ENCODE measurements at regions of chr6 and their contacts with region 1.

Region 1: DNA sequence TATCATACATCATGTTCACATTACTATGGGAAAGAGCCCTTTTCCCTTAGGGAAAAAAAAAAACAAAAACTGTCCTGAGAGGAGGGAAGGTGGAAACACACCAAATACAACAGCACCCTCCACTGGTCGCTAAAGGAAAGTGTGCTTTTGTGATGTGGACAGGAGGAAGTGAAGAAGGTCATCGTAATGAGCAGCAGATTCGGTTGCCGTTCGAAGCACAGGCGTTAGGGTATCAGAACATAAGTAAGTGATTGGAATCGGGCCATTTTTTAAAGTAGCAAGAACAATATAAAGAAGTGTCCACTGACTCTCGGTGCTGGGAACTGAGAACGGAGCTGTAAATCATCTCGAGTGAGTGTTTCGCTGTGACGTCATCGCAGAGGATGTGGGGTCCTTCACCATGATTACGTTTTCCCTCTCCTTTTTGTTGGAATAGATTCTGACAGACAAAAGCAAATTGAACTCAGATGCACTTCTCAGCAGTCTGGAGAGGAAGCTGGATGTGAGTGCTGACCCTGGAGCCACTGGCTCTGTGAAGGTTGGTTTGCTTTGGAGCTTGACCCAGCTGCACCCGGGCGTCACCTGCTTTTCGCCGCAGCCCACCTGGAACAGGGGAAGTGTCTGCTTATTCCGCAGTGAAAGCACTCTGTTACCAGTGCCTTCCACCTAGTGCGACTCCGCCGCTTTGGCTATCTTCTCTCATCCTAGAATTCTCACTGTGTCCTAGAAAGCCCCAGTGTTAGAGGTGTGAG is 203.6 kb upstream of the GMDS start:
- DNase-seq: peak; percentile 34
- H3K4me3 Mint-ChIP-seq: peak overlapping the region; percentile 14
- H3K27ac Mint-ChIP-seq: no peak overlapping the region
- H3K4me1 Mint-ChIP-seq: peaks cover 3% of the 10 kb centered on the region
- H3K27me3 Mint-ChIP-seq: peaks cover 3% of the 10 kb centered on the region

Region 2: GRCh38 chr6:2434116-2434515 is 14.9 kb before region 1 on chr6:
- CTCF ChIA-PET with region 1: interaction called, 10 read pairs
- POLR2A ChIA-PET with region 1: no interaction called
- intact Hi-C with region 1: no loop called
- DNase-seq: no peak
- H3K4me3 Mint-ChIP-seq: no peak overlapping the region
- H3K27ac Mint-ChIP-seq: no peak overlapping the region
- H3K4me1 Mint-ChIP-seq: no peaks in the 10 kb centered on the region
- H3K27me3 Mint-ChIP-seq: peaks cover 2% of the 10 kb centered on the region